Activated CD4-positive, alpha-beta memory T cell treated with anti-CD3 and anti-CD28 coated beads for 36 hours (primary cell): ENCODE measurements at regions of chrX and their contacts with region 1.

Region 1: GRCh38 chrX:134654398-134655012 is 3.8 kb downstream of the PLAC1 start:
- DNase-seq: peak; percentile 63
- H3K4me3 Mint-ChIP-seq: no peak overlapping the region
- H3K27ac Mint-ChIP-seq: peak overlapping the region; percentile 56
- H3K4me1 Mint-ChIP-seq: peaks cover 19% of the 10 kb centered on the region
- H3K27me3 Mint-ChIP-seq: peaks cover 8% of the 10 kb centered on the region

Region 2: GRCh38 chrX:134013092-134013497 is 641.4 kb before region 1 on chrX:
- CTCF ChIA-PET with region 1: no interaction called
- POLR2A ChIA-PET with region 1: no interaction called
- intact Hi-C with region 1: loop called (anchors 5 kb)
- DNase-seq: no peak
- H3K4me3 Mint-ChIP-seq: no peak overlapping the region
- H3K27ac Mint-ChIP-seq: no peak overlapping the region
- H3K4me1 Mint-ChIP-seq: peaks cover 7% of the 10 kb centered on the region
- H3K27me3 Mint-ChIP-seq: peaks cover 5% of the 10 kb centered on the region

Region 3: DNA sequence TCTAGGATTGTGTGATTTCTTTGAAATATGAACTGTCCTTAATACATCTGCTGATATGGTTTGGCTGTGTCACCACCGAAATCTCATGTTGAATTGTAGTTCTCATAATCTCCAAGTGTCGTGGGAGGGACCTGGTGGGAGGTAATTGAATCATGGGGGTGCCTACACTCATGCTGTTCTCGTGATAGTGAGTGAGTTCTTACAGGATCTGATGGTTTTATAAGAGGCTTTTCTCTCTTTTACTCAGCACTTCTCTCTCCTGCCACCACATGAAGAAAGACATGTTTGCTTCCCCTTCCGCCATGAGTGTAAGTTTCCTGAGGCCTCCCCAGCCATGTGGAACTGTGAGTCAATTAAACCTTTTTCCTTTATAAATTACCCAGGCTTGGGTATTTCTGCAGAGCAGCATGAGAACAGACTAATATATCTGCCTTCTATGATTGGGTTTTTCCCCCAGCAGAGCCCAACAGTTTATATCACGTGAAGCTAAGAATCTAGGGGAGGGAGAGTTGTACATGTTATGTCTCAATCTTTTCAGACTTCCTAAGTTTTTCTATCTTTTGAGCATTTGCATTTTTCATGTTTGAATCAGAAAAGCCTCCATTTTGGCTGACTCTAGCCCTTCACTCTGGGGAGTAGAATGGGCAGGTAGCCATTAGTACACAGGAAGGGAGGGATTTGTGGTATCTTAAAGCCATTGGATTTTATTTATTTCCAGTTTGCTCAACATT is 55.2 kb before region 1 on chrX:
- CTCF ChIA-PET with region 1: no interaction called
- POLR2A ChIA-PET with region 1: interaction called, 3 read pairs
- intact Hi-C with region 1: loop called (anchors 1 kb)
- DNase-seq: peak; percentile 56
- H3K4me3 Mint-ChIP-seq: no peak overlapping the region
- H3K27ac Mint-ChIP-seq: peak overlapping the region; percentile 45
- H3K4me1 Mint-ChIP-seq: peaks cover 21% of the 10 kb centered on the region
- H3K27me3 Mint-ChIP-seq: peaks cover 11% of the 10 kb centered on the region

Region 4: GRCh38 chrX:134622056-134622812 is 32.3 kb before region 1 on chrX:
- CTCF ChIA-PET with region 1: no interaction called
- POLR2A ChIA-PET with region 1: no interaction called
- intact Hi-C with region 1: loop called (anchors 1 kb)
- DNase-seq: peak; percentile 36
- H3K4me3 Mint-ChIP-seq: no peak overlapping the region
- H3K27ac Mint-ChIP-seq: no peak overlapping the region
- H3K4me1 Mint-ChIP-seq: peaks cover 22% of the 10 kb centered on the region
- H3K27me3 Mint-ChIP-seq: peaks cover 6% of the 10 kb centered on the region

Region 5: DNA sequence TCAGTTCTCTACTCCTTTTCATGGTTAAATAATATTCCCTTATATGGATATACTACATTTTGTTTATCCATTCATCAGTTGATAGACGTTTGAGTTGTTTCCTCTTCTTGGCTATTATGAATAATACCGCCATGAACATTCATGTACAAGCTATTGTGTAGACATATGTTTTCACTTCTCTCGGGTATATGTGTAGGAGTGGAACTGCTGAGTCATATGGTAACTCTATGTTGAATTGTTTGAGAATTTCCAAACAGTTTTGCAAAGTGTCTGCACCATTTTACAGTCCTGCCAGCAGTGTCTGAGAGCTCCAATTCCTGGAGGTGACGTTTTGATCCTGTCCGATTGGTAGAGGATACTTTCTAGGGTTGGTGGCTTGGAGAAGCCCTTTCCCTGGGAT is 19.8 kb before region 1 on chrX:
- CTCF ChIA-PET with region 1: no interaction called
- POLR2A ChIA-PET with region 1: interaction called, 5 read pairs
- intact Hi-C with region 1: loop called (anchors 1 kb)
- DNase-seq: no peak
- H3K4me3 Mint-ChIP-seq: no peak overlapping the region
- H3K27ac Mint-ChIP-seq: no peak overlapping the region
- H3K4me1 Mint-ChIP-seq: peaks cover 8% of the 10 kb centered on the region
- H3K27me3 Mint-ChIP-seq: peaks cover 18% of the 10 kb centered on the region

Region 6: DNA sequence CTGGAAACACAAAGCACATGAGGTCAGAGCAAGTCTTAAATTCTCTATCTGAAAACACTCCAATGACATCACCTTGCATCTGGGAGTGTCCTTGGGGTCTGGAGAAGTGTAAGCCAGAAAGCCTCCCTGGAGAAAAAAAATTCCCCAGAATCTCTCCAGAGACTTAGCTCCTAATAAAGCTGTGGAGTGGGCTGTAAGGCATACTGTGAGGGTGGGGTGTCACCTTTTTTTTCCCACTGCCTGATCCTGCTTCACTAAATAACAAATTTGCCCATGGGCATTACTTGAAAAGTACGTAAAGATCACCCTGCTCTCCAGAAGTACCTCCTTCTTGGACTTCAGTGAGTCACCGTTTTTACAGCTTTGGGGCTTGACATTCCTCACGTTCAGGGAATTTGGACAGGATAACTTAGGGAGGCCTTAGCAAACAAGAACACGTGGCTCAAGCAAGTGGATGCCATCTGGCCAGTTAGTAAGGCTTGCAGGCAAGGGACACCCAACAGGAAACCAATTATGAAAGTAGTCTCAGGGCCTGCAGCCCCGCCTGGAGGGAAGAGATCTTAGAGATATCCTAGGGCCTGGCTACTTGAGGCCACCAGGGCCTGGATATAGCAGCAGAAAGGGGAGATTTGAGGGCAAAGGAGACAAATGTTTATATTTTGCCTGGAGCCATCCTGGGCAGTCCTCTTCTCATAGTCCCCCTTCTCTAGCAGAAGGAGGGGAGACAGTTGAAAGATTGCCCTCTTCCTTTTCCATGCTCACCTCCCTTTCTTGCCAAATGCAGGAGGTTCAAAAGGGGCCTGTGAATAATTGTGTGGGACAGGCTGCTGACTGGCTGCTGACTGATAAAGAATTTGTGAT is 63.8 kb after region 1 on chrX:
- CTCF ChIA-PET with region 1: no interaction called
- POLR2A ChIA-PET with region 1: no interaction called
- intact Hi-C with region 1: loop called (anchors 1 kb)
- DNase-seq: peak; percentile 9
- H3K4me3 Mint-ChIP-seq: no peak overlapping the region
- H3K27ac Mint-ChIP-seq: no peak overlapping the region
- H3K4me1 Mint-ChIP-seq: peaks cover 11% of the 10 kb centered on the region
- H3K27me3 Mint-ChIP-seq: peaks cover 3% of the 10 kb centered on the region